Heart left ventricle (tissue), 16 donors: ENCODE measurements at regions of chr2 and their contacts with region 1.

Region 1: GRCh38 chr2:118177884-118178283 is 89.6 kb downstream of the INSIG2 start:
- DNase-seq: no peak
- ATAC-seq: no peak
- H3K4me3 ChIP-seq: no peak overlapping the region
- H3K27ac ChIP-seq: no peak overlapping the region
- H3K4me1 ChIP-seq: peaks cover 0 to 4% (median 0%) of the 10 kb centered on the region in 12 donors
- H3K27me3 ChIP-seq: peaks cover 0 to 22% (median 0%) of the 10 kb centered on the region in 9 donors
- CTCF ChIP-seq: no peak
- POLR2A ChIP-seq: no peak

Region 2: DNA sequence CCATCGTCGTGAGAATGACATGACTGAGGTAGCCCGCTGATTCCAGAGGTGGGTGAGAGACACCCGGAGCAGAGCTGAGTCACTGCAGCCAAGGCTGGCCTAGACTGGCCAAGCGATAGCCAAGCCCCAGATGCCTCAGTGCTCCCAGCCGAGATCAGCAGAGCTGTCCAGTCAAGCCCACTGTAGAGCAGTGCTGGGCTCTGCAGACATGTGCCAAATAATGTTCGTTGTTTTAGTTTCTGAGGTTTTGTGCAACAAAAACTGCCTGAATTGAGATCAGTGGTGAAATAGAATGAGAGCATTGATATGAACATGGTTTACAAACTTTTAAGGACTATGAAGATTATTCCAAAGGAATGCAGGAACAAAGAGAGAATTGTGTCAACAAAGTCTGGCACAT is 47.5 kb before region 1 on chr2:
- intact Hi-C with region 1: loop called in 1 of 10 experiments (anchors 2 kb)
- DNase-seq: no peak
- ATAC-seq: no peak
- H3K4me3 ChIP-seq: no peak overlapping the region
- H3K27ac ChIP-seq: no peak overlapping the region
- H3K4me1 ChIP-seq: peaks cover 0 to under 1% (median 0%) of the 10 kb centered on the region in 12 donors
- H3K27me3 ChIP-seq: peaks cover 0 to 3% (median 0%) of the 10 kb centered on the region in 9 donors
- CTCF ChIP-seq: no peak
- POLR2A ChIP-seq: no peak